Activated T-helper 2 cell treated with anti-CD3 and anti-CD28 coated beads, Interferon-gamma antibody, Interleukin-2, Interleukin-4, amounts not matched to agents 10 μg/mL and 5 μg/mL and 100 μg/mL, durations not matched to agents 14 hours and 24 hours and 36 hours (primary cell): ENCODE measurements at regions of chr1 and their contacts with region 1.

Region 1: DNA sequence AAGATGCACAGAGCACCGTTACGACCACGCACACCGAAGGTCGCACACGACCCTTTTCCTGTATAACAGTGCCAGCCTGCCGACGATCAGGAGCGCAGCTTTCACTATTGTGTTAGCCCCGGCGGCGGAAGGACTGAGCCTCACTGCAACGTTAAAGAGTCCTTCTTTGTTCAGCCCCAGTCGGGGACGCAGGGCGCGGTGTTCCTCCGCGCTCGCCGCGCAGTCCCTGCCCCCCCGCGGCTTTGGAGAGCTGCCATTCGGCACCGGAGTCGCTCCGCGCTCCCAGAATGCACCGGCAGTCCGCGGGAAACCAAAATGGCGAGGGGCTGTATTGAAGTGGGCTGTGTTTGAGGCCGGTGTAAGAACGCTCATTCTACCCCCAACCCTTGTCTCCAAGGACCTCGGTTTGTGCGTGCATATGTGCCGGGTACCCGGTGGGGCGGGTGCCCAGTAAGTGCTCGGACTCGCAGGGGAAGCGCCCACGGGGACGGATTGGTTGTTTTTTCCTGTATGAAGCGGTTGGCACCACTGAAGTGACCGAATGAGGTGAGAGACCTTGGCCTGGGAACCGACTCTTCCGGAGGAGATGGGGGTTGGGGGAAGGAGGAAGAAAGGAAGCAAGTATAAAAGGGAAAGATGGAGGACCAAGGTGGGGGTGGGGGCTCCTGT is at the start of gene MTF2:
- DNase-seq: peak; percentile 93
- H3K4me3 Mint-ChIP-seq: peak within 1 kb of the TSS; percentile 93
- H3K27ac Mint-ChIP-seq: peak within 1 kb of the TSS; percentile 89
- H3K4me1 Mint-ChIP-seq: peaks cover 25% of the 10 kb centered on the region
- H3K27me3 Mint-ChIP-seq: no peaks in the 10 kb centered on the region
- total RNA-seq, gene MTF2: 73.1 and 83.5 TPM in 2 replicates

Region 2: GRCh38 chr1:92858564-92859399 is 220.3 kb before region 1 on chr1:
- intact Hi-C with region 1: loop called (anchors 1 kb)
- DNase-seq: peak; percentile 45
- H3K4me3 Mint-ChIP-seq: peak overlapping the region; percentile 52
- H3K27ac Mint-ChIP-seq: peak overlapping the region; percentile 61
- H3K4me1 Mint-ChIP-seq: peaks cover 28% of the 10 kb centered on the region
- H3K27me3 Mint-ChIP-seq: no peaks in the 10 kb centered on the region

Region 3: GRCh38 chr1:92994105-92994712 is 84.9 kb before region 1 on chr1:
- intact Hi-C with region 1: no loop called
- DNase-seq: peak; percentile 57
- H3K4me3 Mint-ChIP-seq: no peak overlapping the region
- H3K27ac Mint-ChIP-seq: peak overlapping the region; percentile 14
- H3K4me1 Mint-ChIP-seq: peaks cover 46% of the 10 kb centered on the region
- H3K27me3 Mint-ChIP-seq: no peaks in the 10 kb centered on the region

Region 4: GRCh38 chr1:93021539-93022134 is 57.5 kb before region 1 on chr1:
- intact Hi-C with region 1: loop called (anchors 1 kb)
- DNase-seq: no peak
- H3K4me3 Mint-ChIP-seq: no peak overlapping the region
- H3K27ac Mint-ChIP-seq: no peak overlapping the region
- H3K4me1 Mint-ChIP-seq: peaks cover 12% of the 10 kb centered on the region
- H3K27me3 Mint-ChIP-seq: peaks cover 24% of the 10 kb centered on the region

Region 5: DNA sequence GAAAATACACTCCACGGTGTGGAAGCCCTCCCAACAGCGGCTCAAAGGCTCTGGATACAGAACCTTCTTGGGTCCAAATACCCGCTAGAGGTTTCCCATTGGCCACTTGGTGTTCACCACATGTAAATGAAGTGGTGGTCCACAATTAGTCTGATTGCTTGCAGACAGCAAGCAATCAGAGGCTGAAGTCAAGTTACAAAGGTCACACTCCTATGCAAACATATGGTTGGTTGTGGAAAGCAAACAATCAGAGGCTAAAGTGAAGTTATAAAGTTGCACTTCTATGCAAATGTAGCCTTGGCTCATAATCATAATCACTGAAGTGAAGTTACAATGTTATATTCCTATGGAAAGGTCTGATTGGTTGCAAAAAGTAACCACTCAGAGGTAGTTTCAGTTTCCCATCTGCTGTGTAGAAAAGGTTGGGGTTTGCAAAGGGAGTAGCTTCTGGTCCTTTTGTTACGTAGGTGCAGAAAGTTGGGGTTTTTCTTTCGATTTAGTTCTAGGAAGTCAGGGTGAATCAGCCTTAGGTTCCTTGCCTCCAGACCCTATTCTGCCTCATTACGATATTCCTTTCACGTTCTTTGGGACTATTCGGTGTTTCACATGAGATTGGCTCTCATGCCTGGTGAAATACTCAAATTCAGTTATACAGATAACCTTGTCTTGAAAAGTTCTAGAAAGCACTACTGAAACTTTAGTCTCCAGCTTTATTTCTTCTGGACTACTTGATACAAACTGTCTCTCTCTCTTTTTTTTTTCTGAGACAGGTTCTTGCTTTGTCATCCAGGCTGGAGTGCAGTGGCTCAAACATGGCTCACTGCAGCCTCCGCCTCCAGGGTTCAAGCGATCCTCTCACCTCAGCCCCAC is 36.7 kb before region 1 on chr1:
- intact Hi-C with region 1: loop called (anchors 1 kb)
- DNase-seq: peak; percentile 37
- H3K4me3 Mint-ChIP-seq: peak overlapping the region; percentile 71
- H3K27ac Mint-ChIP-seq: peak overlapping the region; percentile 92
- H3K4me1 Mint-ChIP-seq: peaks cover 34% of the 10 kb centered on the region
- H3K27me3 Mint-ChIP-seq: no peaks in the 10 kb centered on the region

Region 6: DNA sequence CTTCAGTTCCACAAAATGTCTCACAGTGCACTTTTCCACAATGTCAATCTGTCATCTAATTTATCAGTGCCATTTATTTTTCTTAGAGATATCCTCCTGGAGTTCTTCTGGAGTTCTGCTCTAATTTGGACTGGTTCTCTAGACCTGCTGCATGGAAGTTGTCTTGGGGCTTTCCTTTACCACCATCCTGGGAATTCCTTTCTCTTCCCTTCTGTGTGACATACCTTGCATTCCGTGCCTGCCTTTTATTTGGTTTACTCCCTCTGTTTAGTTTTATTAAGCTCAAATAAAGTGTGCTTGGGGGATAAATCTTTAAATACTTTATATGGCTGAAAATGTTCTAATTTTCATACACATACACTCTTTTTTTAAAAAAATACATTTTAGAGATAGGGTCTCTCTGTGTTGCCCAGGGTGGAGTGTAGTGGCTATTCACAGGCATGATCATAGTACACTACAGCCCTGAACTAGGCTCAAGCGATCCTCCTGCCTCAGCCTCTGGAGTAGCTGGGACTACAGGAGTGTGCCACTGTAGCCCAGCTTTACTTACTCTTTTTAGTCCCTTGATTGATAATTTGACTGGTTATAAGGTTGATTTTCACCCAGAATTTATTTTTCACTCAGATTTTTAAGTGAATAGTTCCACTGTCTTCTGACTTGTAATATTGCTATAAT is 14.3 kb after region 1 on chr1:
- intact Hi-C with region 1: no loop called
- DNase-seq: no peak
- H3K4me3 Mint-ChIP-seq: no peak overlapping the region
- H3K27ac Mint-ChIP-seq: no peak overlapping the region
- H3K4me1 Mint-ChIP-seq: peaks cover 20% of the 10 kb centered on the region
- H3K27me3 Mint-ChIP-seq: no peaks in the 10 kb centered on the region

Region 7: GRCh38 chr1:93148001-93148400 is 68.9 kb after region 1 on chr1:
- intact Hi-C with region 1: loop called (anchors 5 kb)
- DNase-seq: no peak
- H3K4me3 Mint-ChIP-seq: no peak overlapping the region
- H3K27ac Mint-ChIP-seq: no peak overlapping the region
- H3K4me1 Mint-ChIP-seq: peaks cover 5% of the 10 kb centered on the region
- H3K27me3 Mint-ChIP-seq: no peaks in the 10 kb centered on the region

Region 8: DNA sequence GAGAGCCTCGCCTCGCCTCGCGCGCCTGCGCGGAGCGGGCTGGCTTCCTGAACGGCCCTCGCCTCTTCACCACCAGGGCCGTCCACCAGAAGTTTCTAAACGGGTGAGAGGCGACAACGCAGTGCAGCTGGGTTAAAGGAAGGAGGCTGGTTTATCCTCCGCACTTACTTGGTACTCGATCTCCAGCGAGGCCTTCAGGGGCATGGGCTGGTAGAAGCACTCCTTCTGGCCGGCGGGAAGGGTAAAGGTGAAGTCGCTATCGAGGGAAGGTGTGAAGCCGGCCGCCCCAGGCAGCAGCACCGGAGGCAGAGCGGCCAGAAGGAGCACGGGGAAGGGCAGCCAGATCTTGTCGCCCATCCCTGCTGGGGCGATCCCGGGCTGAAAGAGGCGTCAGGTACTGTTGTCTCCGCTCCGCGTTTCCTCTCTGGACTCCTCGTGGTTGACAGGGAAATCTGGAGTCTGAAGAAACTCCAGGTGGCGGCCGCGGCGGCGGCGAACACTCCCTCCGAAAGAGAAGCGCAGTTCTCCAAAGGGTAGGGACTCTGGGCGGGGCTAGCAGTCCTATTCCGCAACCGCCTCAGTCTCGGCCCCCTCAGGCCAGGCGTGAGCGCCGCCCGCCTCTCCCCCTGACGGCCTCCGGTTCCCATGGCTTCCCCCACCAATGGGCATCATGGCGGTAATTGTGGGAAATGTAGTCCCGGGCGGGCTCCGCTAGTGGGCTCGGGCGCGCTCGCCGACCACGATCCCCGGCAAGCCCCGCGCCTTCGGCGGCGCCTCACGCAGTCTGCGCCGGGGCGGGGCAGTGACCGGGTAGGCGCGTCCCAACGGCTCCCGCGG is 101.0 kb after region 1 on chr1 and contains the start of gene TMED5:
- intact Hi-C with region 1: loop called (anchors 1 kb)
- DNase-seq: peak; percentile 97
- H3K4me3 Mint-ChIP-seq: peak within 1 kb of the TSS; percentile 97
- H3K27ac Mint-ChIP-seq: peak within 1 kb of the TSS; percentile 99
- H3K4me1 Mint-ChIP-seq: peaks cover 52% of the 10 kb centered on the region
- H3K27me3 Mint-ChIP-seq: no peaks in the 10 kb centered on the region
- total RNA-seq, gene TMED5: 58.6 and 60.4 TPM in 2 replicates